AG04449 (cell line): ENCODE measurements at regions of chr10 and their contacts with region 1.

Region 1: DNA sequence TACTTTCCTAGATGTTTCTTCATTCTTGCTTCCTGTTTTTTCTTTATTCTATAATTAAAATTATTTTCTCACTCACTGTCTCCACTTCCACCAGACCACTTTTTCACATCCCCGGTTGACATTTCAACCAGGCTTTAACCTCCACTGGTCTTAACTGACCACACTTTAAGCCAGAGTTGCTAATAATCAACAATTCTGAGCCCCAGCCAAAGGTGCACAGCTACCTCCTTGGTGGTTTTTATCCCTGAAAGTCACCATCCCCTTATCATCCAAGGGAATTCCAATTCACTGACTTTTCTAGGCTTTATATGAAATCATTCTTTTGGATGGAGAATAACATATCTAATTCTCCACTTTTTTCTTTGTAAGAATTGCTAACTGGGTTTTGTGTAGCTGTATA is 138.9 kb downstream of the FRMD4A start:
- DNase-seq: no peak
- H3K4me3 ChIP-seq: no peak overlapping the region
- CTCF ChIP-seq: no peak

Region 2: DNA sequence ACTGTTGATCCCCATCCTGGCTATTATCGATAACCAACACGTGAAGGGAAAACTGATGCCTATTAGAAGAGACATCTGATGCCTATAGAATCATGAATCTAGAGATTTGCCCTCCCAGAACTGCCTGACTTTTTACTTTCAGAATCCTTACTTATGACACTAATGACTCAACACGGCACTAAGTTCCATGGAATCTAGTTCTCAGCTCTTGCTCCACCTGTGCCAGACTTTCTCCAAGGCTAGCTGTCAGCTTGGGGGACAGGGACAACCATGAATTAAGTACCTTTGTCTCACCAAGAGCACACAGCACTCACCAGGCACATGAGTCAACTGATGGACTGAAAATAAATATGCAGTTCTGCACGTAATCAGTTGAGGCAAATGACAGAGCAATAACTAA is 45.4 kb before region 1 on chr10:
- CTCF ChIA-PET with region 1: no interaction called
- POLR2A ChIA-PET with region 1: no interaction called
- DNase-seq: peak; percentile 3
- H3K4me3 ChIP-seq: no peak overlapping the region
- CTCF ChIP-seq: no peak

Region 3: DNA sequence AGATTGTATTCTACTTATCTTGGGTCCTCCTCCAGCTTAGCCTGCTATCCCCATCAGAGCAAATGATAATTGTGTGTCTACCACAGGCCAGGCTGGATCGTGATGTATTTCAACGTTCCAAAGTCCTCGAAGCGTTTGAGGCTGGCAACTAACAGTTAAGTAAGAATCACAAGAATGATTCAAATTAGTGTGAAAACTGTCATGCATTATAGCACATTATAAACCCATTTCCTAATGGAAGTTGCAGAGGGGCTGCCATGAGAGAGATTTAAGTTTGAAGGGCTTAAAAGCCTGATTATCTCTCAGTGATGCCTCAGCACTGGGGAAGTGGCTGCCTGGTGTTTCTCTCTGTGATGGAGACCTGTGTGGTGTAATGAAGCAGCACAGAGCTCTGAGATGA is 19.7 kb after region 1 on chr10:
- CTCF ChIA-PET with region 1: interaction called, 16 read pairs
- POLR2A ChIA-PET with region 1: no interaction called
- DNase-seq: no peak
- H3K4me3 ChIP-seq: no peak overlapping the region
- CTCF ChIP-seq: no peak

Region 4: DNA sequence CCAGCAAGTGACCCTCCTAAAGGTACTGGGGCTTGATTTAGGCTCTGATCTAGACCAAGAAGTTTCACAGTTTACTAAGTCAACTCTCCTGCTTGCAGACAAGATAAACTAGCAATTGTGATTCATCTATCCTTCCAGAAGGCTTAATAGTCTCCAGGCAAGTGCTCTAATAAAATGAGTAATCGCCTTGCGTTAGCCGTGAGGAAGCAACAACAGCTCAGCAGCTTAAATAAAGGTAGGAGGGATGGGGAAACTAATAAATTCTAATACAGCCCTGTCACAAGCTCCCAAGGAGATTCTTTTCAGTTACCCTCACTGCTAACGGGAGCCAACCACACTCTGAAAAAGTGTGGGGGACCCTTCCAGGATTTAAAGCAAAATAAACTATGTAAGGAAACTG is 90.4 kb after region 1 on chr10:
- CTCF ChIA-PET with region 1: no interaction called
- POLR2A ChIA-PET with region 1: no interaction called
- DNase-seq: no peak
- H3K4me3 ChIP-seq: no peak overlapping the region
- CTCF ChIP-seq: no peak

Region 5: GRCh38 chr10:14318007-14318406 is 126.1 kb after region 1 on chr10:
- CTCF ChIA-PET with region 1: no interaction called
- POLR2A ChIA-PET with region 1: no interaction called
- DNase-seq: no peak
- H3K4me3 ChIP-seq: no peak overlapping the region
- CTCF ChIP-seq: no peak

Region 6: GRCh38 chr10:14588084-14588937 is 396.4 kb after region 1 on chr10:
- CTCF ChIA-PET with region 1: no interaction called
- POLR2A ChIA-PET with region 1: no interaction called
- DNase-seq: peak; percentile 98
- H3K4me3 ChIP-seq: peak overlapping the region; percentile 46
- CTCF ChIP-seq: no peak